ENCODE measurements at regions of chr5 and their contacts with region 1.

Region 1: GRCh38 chr5:154467655-154468354 is 10.2 kb downstream of the HAND1 start:
- DNase-seq: peak; percentile 38
- ATAC-seq: peak; percentile 99
- H3K4me3 ChIP-seq: no peak overlapping the region
- H3K27ac ChIP-seq: no peak overlapping the region
- H3K4me1 ChIP-seq: no peaks in the 10 kb centered on the region
- H3K27me3 ChIP-seq: peaks cover 5% of the 10 kb centered on the region; the same call in 1 of the 2 replicates
- CTCF ChIP-seq: peak; percentile 94

Region 2: DNA sequence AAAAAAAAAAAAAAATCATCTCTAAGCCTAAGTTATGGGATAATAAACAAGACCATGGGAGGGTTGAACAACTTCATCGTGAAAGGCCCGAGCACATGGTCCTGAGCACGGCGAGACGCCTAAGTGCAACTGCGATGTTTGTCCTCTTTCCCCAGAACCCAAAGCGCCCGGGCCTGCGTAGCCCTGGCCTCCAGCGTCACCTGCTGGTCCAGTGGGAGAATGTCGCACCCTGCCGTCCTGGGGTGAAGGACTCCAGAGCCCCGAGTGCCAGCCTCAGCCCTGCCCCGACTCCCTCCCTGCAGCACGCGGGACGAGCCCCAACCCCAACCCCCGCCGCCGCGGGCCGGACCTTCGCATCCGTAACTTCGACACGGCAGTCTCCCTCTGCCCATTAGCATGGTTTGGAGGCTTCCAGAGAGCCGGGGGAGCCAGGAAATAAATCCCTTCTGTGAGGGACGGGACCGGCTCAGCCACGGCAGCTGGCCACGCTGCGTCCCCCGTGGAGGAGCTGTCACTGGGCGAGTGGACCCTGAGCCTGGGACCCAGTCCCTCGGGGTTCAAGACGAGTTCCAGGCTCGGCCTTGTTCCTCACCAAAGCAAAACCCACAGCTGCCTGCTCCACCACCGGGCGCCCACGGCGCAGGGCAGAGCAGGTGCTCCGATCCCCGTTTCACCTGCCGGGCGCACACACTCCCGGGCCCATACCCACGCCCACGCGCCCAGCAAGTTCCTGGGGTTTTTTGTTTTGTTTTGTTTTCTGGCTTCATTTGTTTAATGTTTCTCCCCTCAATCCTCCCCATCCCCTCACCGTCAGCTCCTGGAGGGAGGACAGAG is 142.7 kb after region 1 on chr5:
- CTCF ChIA-PET with region 1: interaction called, 24 read pairs
- POLR2A ChIA-PET with region 1: no interaction called
- in situ Hi-C with region 1: no loop called
- intact Hi-C with region 1: loop called (anchors 1 kb)
- DNase-seq: peak; percentile 57
- ATAC-seq: peak; percentile 97
- H3K4me3 ChIP-seq: peak overlapping the region; percentile 27 to 49
- H3K27ac ChIP-seq: no peak overlapping the region
- H3K4me1 ChIP-seq: peaks cover 7% of the 10 kb centered on the region
- H3K27me3 ChIP-seq: peaks cover 21% of the 10 kb centered on the region
- CTCF ChIP-seq: peak; percentile 98

Measured in Panc1 (cell line).